ENCODE measurements at regions of chr6 and their contacts with region 1.

Region 1: DNA sequence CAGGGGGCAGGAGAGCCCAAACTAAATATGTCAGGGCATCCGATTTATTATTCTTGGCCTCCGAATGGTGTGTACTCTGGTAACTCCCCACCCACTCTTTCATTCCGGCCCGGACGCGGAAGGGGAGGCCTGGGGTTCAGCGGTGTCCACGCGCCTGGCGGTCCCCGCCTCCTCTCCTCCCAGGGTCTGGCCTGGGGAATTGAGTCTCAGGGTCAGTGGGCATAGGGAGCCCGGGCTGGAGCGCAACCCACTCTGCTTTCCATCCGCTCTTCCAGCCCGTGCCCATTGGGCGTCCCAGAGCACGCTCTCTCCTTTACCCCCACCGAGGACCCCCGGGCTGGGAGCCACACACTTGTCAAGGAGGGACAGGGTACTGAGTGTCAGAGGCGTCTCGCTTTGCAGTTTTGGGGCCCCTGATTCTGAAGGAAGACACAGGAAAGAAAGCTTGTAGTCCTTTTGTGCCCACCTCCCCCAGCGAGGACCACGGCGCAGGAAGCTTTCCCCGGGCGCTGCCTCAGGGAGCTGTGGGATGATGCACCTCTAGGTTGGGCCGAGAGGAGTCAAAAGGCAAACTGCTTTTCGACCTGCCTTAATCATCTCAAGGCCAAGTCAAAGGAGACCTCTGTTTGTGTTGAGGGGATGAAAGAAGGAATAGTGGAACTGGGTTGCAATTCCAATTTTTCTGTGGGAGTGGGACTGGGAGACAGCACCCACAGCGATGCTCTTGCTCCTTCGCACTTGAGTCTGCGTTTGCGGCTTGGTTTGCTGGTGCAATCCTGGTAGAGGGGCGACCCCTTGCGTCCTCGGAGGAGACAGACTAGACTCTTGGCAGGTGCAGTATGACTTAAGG is 2.5 kb downstream of the RSPO3 start:
- DNase-seq: peak; percentile 95

Region 2: DNA sequence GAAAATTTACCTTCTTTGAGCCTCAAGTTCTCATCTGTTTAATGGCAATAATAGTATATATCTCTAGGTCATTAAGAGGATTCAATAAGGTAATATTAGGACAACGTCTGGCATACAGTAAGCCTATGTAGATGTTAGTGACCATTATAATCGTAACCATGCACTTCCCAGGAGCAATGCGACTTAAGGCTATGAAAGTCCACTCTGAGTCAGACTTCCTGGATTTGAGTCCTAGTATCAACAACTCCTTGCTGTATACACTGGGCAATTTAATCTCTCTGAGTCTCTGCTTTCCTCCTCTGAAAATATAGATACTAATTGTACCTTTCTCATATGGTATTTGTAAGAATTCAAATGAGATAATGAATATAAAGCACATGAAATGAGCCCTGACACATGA is 1651.1 kb before region 1 on chr6:
- intact Hi-C with region 1: loop called in 1 of 2 experiments (anchors 10 kb)
- DNase-seq: no peak

Region 3: GRCh38 chr6:126002755-126003679 is 1118.0 kb before region 1 on chr6:
- intact Hi-C with region 1: loop called in 1 of 2 experiments (anchors 10 kb)
- DNase-seq: no peak

Region 4: DNA sequence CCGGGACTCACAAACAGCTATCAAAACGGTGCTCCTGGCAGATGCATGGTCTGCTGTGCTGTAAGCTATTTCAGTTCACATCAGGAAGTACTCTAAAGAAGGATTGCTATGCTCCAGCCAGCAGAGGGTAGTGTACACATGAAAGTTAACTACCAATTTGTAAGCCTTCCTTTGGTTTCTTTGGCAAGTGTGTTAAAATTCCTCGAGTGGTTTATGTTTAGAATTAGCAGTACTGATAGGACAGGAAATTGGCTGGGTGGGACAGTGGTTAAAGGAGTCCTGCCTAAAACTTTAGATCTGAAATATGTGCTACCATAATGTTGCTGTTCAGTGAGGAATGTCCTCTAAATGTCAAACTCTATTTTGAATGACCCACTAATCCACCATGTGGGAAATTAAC is 1087.3 kb before region 1 on chr6:
- intact Hi-C with region 1: loop called in 1 of 2 experiments (anchors 10 kb)
- DNase-seq: no peak

Region 5: GRCh38 chr6:126811321-126811720 is 309.7 kb before region 1 on chr6:
- intact Hi-C with region 1: loop called in 1 of 2 experiments (anchors 10 kb)
- DNase-seq: no peak

Region 6: DNA sequence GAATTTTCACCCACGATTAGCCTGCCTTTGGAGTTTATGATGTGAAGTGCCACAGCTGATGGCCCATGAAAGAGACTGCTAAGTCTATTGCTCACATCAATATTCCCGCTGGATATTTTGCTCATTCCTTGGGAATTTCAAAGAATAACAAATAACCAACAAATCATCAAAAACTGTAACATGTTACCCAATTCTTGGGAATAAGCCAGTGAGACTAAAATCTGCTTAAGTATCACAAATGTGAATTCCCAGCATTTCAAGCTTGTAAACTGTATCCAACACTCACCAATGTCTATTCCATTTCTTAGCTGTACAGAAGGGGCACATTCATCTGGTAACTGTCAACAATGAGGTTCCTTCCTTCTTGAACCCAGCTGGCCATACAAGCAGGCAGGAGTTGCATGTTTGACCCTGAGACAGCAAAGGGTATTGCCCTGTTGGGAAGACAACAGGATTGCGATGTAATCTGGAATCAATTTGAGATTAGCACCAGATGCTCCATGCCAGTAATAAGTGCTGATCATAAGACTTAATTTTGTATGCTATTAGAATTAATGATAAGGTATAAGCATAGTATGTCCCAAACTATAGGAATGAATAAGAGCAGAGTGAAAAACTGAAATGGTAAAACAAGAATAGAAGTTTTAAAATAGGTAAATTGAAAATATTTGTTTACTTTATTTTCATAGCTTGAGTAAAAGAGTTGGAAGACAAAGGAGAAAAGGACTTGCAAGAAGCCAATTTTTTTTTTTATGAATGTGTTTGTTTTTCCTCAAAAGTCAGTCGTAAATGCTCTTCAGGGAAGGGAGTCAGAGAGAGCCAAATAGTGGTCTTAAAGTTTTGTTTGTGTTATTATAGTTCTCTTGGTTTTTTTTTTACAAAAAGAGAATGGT is 56.3 kb after region 1 on chr6:
- intact Hi-C with region 1: loop called in 1 of 2 experiments (anchors 2 kb)
- DNase-seq: no peak

Measured in posterior vena cava (tissue), 2 donors.